ENCODE measurements at regions of chr5 and their contacts with region 1.

Region 1: GRCh38 chr5:7815892-7816534 is 34.9 kb downstream of the CFAP90 start:
- DNase-seq: peak; percentile 86 to 88
- ATAC-seq: peak; percentile 95 to 98 (median 96)
- H3K4me3 ChIP-seq: no peak overlapping the region
- H3K27ac ChIP-seq: peak overlapping the region; percentile 23
- H3K4me1 ChIP-seq: no peaks in the 10 kb centered on the region
- H3K27me3 ChIP-seq: no peaks in the 10 kb centered on the region
- CTCF ChIP-seq: peak; percentile 82

Region 2: GRCh38 chr5:7261049-7261448 is 555.0 kb before region 1 on chr5:
- intact Hi-C with region 1: loop called in 1 of 2 experiments (anchors 5 kb)
- DNase-seq: no peak
- ATAC-seq: peak in 2 of 4 donors; percentile 66 to 67
- H3K4me3 ChIP-seq: no peak overlapping the region
- H3K27ac ChIP-seq: no peak overlapping the region
- H3K4me1 ChIP-seq: no peaks in the 10 kb centered on the region
- H3K27me3 ChIP-seq: no peaks in the 10 kb centered on the region
- CTCF ChIP-seq: peak; percentile 63

Region 3: DNA sequence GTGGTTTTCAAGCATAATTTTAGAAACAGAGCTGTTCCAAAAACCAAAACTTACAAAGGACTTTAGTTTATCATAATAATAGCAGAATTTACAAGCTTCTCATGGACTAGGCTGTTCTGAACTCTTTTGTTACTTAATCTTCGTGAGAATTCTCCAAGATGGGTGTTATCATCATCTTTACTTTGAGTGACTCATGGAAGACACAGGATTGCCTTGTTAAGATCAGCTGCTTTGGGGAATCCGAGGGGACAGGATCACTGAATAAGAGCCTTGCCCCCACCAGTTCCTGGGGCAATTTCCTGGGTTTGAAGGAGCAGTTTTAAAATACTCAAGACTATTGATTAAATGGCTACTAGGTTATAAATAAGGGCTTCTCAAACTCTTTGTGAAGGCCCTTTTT is 45.6 kb before region 1 on chr5:
- intact Hi-C with region 1: loop called in 1 of 2 experiments (anchors 5 kb)
- DNase-seq: no peak
- ATAC-seq: no peak
- H3K4me3 ChIP-seq: no peak overlapping the region
- H3K27ac ChIP-seq: no peak overlapping the region
- H3K4me1 ChIP-seq: peaks cover 9% of the 10 kb centered on the region
- H3K27me3 ChIP-seq: no peaks in the 10 kb centered on the region
- CTCF ChIP-seq: no peak